AG04449 (cell line): ENCODE measurements at regions of chr11 and their contacts with region 1.

Region 1: DNA sequence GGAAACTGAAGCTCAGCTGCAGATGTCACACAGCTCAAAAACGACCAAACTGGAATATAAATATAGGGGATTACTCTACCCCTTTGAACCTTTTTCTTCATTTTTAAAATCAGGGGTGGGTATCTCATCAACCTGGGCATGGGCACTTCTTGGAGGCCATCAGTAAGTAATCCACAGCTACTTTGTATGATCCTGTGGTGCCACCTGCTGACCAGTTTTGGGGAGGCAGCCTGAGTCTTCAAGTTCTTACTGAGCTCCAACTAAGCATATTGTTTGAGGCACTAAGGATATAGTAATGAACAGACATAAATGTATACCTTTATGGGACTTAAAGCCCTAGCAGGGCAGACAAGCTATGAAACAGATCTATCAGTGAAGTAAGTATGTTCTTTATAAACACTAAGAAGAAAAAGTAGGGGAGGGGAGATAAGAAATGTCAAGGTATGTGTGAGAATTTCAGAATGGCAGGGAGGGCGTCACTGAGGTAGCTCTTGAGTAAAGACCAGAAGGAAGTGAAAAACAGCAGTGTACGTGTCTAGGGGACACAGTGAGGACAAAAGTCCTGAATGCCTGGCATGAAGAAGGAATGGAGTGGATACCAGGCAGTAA is 18.4 kb downstream of the TUB start:
- DNase-seq: peak; percentile 46
- H3K4me3 ChIP-seq: no peak overlapping the region
- CTCF ChIP-seq: peak; percentile 88

Region 2: DNA sequence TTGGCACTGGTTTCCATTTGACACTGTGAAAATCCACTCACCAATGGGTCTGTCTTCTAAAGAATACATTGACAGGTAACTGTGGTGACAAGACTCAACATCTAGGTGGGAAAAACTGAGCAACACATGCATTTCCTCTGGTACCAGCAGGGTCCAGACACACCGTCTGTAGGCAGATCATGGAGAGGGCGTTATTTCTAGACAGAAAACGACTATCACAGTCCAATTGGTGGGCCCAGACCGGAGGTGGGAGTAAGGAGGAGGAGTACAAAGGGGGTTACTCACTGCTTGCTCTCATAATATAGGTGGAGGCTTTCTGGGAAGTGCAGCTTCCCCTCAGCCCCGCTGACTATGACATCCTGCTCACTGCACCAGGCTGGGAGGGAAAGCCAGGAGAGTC is 403.0 kb before region 1 on chr11:
- CTCF ChIA-PET with region 1: interaction called, 11 read pairs
- POLR2A ChIA-PET with region 1: no interaction called
- DNase-seq: no peak
- H3K4me3 ChIP-seq: no peak overlapping the region
- CTCF ChIP-seq: no peak

Region 3: GRCh38 chr11:7986768-7987559 is 112.4 kb before region 1 on chr11 and contains the start of gene EIF3F:
- CTCF ChIA-PET with region 1: interaction called, 25 read pairs
- POLR2A ChIA-PET with region 1: no interaction called
- DNase-seq: peak; percentile 99
- H3K4me3 ChIP-seq: peak within 1 kb of the TSS; percentile 77
- CTCF ChIP-seq: peak; percentile 75

Region 4: GRCh38 chr11:8018484-8019313 is 80.7 kb before region 1 on chr11:
- CTCF ChIA-PET with region 1: interaction called, 242 read pairs
- POLR2A ChIA-PET with region 1: no interaction called
- DNase-seq: no peak
- H3K4me3 ChIP-seq: peak overlapping the region; percentile 67
- CTCF ChIP-seq: no peak

Region 5: GRCh38 chr11:8041576-8041975 is 57.8 kb before region 1 on chr11:
- CTCF ChIA-PET with region 1: interaction called, 694 read pairs
- POLR2A ChIA-PET with region 1: no interaction called
- DNase-seq: no peak
- H3K4me3 ChIP-seq: no peak overlapping the region
- CTCF ChIP-seq: no peak

Region 6: DNA sequence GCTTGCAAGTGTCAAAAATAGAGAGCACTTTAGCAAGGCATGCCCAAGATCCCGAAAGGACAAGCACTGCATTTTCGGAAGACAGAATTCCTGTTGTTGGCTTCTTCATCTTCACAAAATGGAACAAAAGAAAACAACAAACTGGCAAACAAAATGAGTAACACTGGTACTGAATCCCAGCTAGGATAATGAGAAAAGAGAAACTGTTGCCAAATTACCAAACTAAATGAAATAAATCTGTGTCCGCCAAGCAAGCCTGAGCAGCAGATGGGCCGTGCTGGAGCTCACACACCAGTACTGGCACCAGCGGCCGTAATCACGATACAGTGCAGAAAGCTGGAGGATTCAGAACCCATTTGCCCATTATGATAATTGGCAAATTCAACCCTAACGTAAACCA is 12.2 kb after region 1 on chr11:
- CTCF ChIA-PET with region 1: interaction called, 80 read pairs
- POLR2A ChIA-PET with region 1: interaction called, 3 read pairs
- DNase-seq: no peak
- H3K4me3 ChIP-seq: no peak overlapping the region
- CTCF ChIP-seq: no peak